ENCODE measurements at regions of chr17 and their contacts with region 1.

Region 1: GRCh38 chr17:27805520-27806146 is 5.3 kb upstream of the NOS2 start:
- DNase-seq: peak; percentile 89
- ATAC-seq: peak; percentile 60
- H3K4me3 Mint-ChIP-seq: peak overlapping the region; percentile 55
- H3K27ac Mint-ChIP-seq: peak overlapping the region; percentile 84
- H3K4me1 Mint-ChIP-seq: peaks cover 45% of the 10 kb centered on the region
- H3K27me3 Mint-ChIP-seq: peaks cover under 1% of the 10 kb centered on the region
- CTCF ChIP-seq: peak; percentile 79

Region 2: DNA sequence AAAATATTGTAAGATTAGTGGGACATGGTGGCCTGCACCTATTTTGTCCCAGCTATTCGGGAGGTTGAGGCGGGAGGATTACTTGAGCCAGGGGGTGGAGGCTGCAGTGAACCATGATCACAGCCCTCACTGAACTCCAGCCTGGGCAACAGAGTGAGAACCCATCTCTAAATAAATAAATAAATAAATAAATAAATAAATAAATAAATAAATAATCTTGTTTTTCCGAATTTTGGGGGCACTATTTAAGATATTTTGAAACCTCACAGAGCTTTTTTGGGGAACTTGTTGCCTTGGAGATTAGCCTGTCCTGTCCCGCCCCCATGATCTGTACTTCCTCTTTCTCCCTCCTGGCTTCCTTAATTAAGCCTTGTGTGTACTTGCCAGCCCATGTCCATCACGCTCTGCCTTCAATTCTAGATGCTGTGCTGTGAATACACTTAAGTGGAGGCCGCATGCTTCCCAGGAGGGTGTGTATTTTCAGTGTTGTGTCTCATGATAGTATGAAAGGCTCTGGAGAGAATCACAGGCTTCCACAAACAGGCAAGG is 170.3 kb before region 1 on chr17:
- CTCF ChIA-PET with region 1: no interaction called
- POLR2A ChIA-PET with region 1: no interaction called
- intact Hi-C with region 1: no loop called
- DNase-seq: no peak
- ATAC-seq: no peak
- H3K4me3 Mint-ChIP-seq: no peak overlapping the region
- H3K27ac Mint-ChIP-seq: no peak overlapping the region
- H3K4me1 Mint-ChIP-seq: peaks cover 19% of the 10 kb centered on the region
- H3K27me3 Mint-ChIP-seq: no peaks in the 10 kb centered on the region
- CTCF ChIP-seq: no peak

Region 3: GRCh38 chr17:27760069-27760885 is 45.4 kb before region 1 on chr17:
- CTCF ChIA-PET with region 1: interaction called, 28 read pairs
- POLR2A ChIA-PET with region 1: no interaction called
- intact Hi-C with region 1: no loop called
- DNase-seq: peak; percentile 82
- ATAC-seq: peak; percentile 68
- H3K4me3 Mint-ChIP-seq: no peak overlapping the region
- H3K27ac Mint-ChIP-seq: no peak overlapping the region
- H3K4me1 Mint-ChIP-seq: no peaks in the 10 kb centered on the region
- H3K27me3 Mint-ChIP-seq: no peaks in the 10 kb centered on the region
- CTCF ChIP-seq: peak; percentile 94

Region 4: GRCh38 chr17:27824745-27825144 is 19.1 kb after region 1 on chr17:
- CTCF ChIA-PET with region 1: interaction called, 11 read pairs
- POLR2A ChIA-PET with region 1: no interaction called
- intact Hi-C with region 1: no loop called
- DNase-seq: no peak
- ATAC-seq: no peak
- H3K4me3 Mint-ChIP-seq: no peak overlapping the region
- H3K27ac Mint-ChIP-seq: no peak overlapping the region
- H3K4me1 Mint-ChIP-seq: no peaks in the 10 kb centered on the region
- H3K27me3 Mint-ChIP-seq: peaks cover 10% of the 10 kb centered on the region
- CTCF ChIP-seq: no peak

Region 5: GRCh38 chr17:27846042-27846655 is 40.5 kb after region 1 on chr17:
- CTCF ChIA-PET with region 1: interaction called, 14 read pairs
- POLR2A ChIA-PET with region 1: no interaction called
- intact Hi-C with region 1: no loop called
- DNase-seq: peak; percentile 48
- ATAC-seq: peak; percentile 79
- H3K4me3 Mint-ChIP-seq: peak overlapping the region; percentile 63
- H3K27ac Mint-ChIP-seq: peak overlapping the region; percentile 84
- H3K4me1 Mint-ChIP-seq: peaks cover 20% of the 10 kb centered on the region
- H3K27me3 Mint-ChIP-seq: no peaks in the 10 kb centered on the region
- CTCF ChIP-seq: no peak

Region 6: DNA sequence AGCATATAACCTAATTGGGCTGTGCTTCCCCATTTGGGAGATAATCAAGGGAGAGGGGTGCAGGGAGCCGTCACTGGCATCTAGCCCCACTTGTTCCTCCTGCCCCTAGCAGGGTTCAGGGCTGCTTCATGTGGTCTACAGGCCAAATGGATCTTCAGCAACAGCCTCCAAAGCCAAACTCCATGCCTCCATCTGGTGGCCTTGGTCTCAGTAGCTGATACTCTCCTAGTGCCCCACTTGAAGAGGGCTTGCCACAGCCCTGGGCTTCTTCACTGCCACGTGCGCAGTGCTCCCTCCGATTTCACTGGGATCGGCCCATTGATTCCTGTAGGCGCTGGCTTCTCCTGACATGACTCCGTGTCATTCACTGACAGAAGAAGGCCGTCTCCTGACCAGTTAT is 62.9 kb after region 1 on chr17:
- CTCF ChIA-PET with region 1: interaction called, 601 read pairs
- POLR2A ChIA-PET with region 1: interaction called, 3 read pairs
- intact Hi-C with region 1: loop called (anchors 5 kb)
- DNase-seq: no peak
- ATAC-seq: no peak
- H3K4me3 Mint-ChIP-seq: no peak overlapping the region
- H3K27ac Mint-ChIP-seq: no peak overlapping the region
- H3K4me1 Mint-ChIP-seq: no peaks in the 10 kb centered on the region
- H3K27me3 Mint-ChIP-seq: no peaks in the 10 kb centered on the region
- CTCF ChIP-seq: no peak

Region 7: GRCh38 chr17:27892866-27893769 is 87.5 kb after region 1 on chr17 and contains the start of gene LYRM9:
- CTCF ChIA-PET with region 1: interaction called, 113 read pairs
- POLR2A ChIA-PET with region 1: interaction called, 6 read pairs
- intact Hi-C with region 1: loop called (anchors 5 kb)
- DNase-seq: peak; percentile 94
- ATAC-seq: peak; percentile 99
- H3K4me3 Mint-ChIP-seq: peak within 1 kb of the TSS; percentile 75
- H3K27ac Mint-ChIP-seq: no peak within 1 kb of the TSS
- H3K4me1 Mint-ChIP-seq: peaks cover 20% of the 10 kb centered on the region
- H3K27me3 Mint-ChIP-seq: peaks cover 15% of the 10 kb centered on the region
- CTCF ChIP-seq: peak; percentile 96
- total RNA-seq, gene LYRM9: 3.1 to 3.5 TPM

Region 8: DNA sequence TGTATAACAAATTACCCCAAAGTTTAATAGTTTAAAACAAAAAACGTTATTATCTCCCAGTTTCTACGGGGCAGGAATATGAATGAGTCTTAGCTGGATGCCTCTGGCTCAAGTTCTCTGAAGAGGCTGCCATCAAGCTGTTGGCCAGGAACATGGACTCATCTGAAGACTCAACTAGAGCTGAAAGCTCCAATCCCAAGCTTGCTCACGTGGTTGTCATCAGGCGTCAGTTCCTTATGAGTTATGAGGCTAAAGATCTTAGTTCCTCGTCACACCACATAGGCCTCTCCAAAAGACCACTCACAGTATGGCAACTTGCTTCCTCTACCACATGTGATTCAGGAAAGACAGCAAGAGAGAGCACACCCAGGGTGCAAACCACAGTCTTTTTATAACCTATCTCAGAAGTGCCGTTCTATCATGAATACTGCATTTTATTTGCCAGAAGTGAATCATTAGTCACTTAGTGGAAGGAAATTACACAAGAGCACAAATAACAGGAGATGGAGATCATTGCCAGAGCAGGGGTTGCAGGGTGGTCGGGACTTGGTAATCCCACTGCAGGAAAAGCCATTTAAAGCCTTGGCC is 188.2 kb after region 1 on chr17:
- CTCF ChIA-PET with region 1: no interaction called
- POLR2A ChIA-PET with region 1: no interaction called
- intact Hi-C with region 1: no loop called
- DNase-seq: no peak
- ATAC-seq: no peak
- H3K4me3 Mint-ChIP-seq: no peak overlapping the region
- H3K27ac Mint-ChIP-seq: no peak overlapping the region
- H3K4me1 Mint-ChIP-seq: no peaks in the 10 kb centered on the region
- H3K27me3 Mint-ChIP-seq: peaks cover 7% of the 10 kb centered on the region
- CTCF ChIP-seq: no peak

Region 9: GRCh38 chr17:28159924-28160323 is 354.3 kb after region 1 on chr17:
- CTCF ChIA-PET with region 1: no interaction called
- POLR2A ChIA-PET with region 1: no interaction called
- intact Hi-C with region 1: no loop called
- DNase-seq: no peak
- ATAC-seq: no peak
- H3K4me3 Mint-ChIP-seq: no peak overlapping the region
- H3K27ac Mint-ChIP-seq: no peak overlapping the region
- H3K4me1 Mint-ChIP-seq: no peaks in the 10 kb centered on the region
- H3K27me3 Mint-ChIP-seq: no peaks in the 10 kb centered on the region
- CTCF ChIP-seq: no peak